MCF 10A (cell line): ENCODE measurements at regions of chr17 and their contacts with region 1.

Region 1: DNA sequence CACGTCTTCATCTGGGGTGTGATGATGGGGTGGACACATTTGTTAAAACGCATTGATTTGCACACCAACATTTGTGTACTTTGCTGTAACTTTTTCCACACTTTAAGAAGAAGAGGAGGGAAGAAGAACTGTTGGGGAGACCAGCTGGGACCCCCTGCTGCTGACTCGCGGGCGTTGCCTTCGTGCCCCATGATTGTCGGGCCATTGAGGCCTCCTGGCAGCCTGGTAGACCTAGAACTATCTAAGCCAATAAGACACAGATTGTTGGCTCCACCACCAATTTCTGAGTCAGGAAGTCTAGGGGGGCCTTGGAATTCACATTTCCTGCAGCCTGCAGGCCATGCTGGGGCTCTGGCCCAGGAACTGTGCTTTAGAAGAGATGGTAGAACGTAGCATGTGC is 105.5 kb downstream of the TNFRSF13B start:
- DNase-seq: no peak
- H3K4me3 Mint-ChIP-seq: no peak overlapping the region
- H3K27ac Mint-ChIP-seq: no peak overlapping the region
- H3K4me1 Mint-ChIP-seq: peaks cover 8% of the 10 kb centered on the region
- H3K27me3 Mint-ChIP-seq: no peaks in the 10 kb centered on the region
- CTCF ChIP-seq: no peak

Region 2: DNA sequence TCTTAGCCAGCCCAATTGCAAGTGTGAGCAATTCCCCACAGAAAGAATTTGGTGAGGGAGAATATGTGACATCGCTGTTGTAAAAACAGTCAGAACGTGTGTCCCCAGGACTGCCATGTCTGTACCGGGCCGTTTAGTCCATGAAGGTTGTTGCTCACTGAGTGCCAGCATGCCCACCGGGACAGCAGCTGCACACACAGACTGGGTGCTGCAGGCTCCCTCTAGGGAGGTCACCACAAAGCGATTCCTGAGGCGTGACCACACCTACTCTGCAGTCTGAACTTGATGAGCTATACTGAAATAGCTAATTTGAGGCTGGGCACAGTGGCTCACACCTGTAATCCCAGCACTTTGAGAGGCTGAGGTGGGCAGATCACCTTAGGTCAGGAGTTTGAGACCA is 965.6 kb before region 1 on chr17:
- CTCF ChIA-PET with region 1: no interaction called
- POLR2A ChIA-PET with region 1: no interaction called
- intact Hi-C with region 1: no loop called
- DNase-seq: no peak
- H3K4me3 Mint-ChIP-seq: no peak overlapping the region
- H3K27ac Mint-ChIP-seq: no peak overlapping the region
- H3K4me1 Mint-ChIP-seq: no peaks in the 10 kb centered on the region
- H3K27me3 Mint-ChIP-seq: no peaks in the 10 kb centered on the region
- CTCF ChIP-seq: no peak

Region 3: DNA sequence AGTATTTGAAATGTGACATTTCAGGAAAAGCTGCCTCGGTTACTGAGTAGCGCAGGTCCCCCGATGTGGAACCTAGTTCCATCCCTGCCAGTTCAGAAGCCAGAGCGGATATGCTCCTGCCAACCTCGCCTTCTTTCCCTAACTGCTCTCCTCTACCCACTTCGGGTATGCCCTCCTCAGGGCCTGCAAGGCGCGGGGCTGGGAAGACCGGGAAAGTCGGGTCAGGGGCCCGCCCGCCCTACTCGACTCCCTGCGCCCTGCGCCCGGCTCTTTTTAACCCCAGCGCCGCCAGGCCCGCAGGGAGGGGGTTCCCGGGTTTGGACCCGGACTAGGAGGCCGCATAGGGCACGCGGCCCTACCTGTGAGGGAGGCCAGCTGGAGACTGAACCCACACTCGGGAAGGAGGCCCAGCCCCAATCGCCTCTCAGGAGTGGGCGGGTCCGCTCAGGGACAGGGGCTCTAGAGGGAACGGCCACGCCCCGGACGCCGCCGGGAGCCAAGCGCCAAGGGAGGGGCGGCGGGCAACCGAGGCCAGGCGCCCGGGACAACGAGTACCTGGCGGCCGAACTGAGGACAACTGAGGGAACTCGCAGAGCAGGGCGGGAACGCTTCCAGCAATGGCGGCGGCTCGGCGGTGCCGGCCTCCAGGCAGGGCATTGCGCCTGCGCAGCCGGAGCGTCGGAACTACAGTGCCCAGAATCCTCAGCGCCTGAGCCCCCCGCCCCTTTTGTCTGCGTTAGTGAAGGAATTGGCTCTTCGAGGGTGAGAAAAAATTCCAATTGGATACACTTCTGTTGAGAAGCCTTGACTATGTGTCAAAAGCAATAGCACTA is 213.0 kb before region 1 on chr17 and contains the start of gene ZNF624:
- CTCF ChIA-PET with region 1: no interaction called
- POLR2A ChIA-PET with region 1: no interaction called
- intact Hi-C with region 1: loop called (anchors 5 kb)
- DNase-seq: peak; percentile 93
- H3K4me3 Mint-ChIP-seq: peak within 1 kb of the TSS; percentile 89
- H3K27ac Mint-ChIP-seq: peak within 1 kb of the TSS; percentile 91
- H3K4me1 Mint-ChIP-seq: peaks cover 6% of the 10 kb centered on the region
- H3K27me3 Mint-ChIP-seq: no peaks in the 10 kb centered on the region
- CTCF ChIP-seq: no peak
- total RNA-seq, gene ZNF624: 3.8 and 4.9 TPM in 2 replicates

Region 4: DNA sequence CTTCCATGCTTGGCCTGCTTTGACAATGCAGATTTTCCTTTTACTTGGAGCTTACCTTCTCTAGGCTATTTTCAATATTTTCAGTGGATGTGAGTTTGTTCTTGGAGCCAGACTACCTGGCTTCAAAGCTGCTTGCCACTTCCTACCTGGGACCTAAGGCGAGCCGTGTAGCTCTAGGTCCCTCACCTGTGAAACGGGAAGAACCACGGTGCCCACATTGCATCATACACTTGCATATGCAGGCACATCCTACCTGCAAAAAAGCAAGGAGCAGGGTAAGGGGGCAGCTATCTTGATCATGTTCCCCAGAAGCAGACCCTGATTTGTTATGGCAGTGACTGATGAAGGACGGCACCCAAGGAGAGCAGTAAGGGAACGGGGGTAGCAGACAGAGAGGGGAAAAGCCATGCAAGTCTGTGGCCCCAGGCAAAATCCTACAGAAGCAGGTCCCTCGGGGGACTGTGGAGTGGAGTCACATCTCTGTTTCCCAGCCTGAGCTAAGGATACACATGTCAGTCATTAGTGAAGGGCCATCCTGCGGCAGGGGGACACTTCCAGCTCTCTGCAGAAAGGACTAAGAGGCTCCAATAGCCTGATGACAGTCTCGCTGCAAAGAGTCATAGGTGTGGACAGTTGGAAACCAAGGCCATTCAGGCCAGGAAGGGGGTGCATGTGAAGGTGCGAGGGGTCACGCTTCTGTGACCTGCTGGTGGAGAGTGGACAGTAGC is 148.9 kb after region 1 on chr17:
- CTCF ChIA-PET with region 1: no interaction called
- POLR2A ChIA-PET with region 1: no interaction called
- intact Hi-C with region 1: no loop called
- DNase-seq: no peak
- H3K4me3 Mint-ChIP-seq: no peak overlapping the region
- H3K27ac Mint-ChIP-seq: peak overlapping the region; percentile 46
- H3K4me1 Mint-ChIP-seq: peaks cover 24% of the 10 kb centered on the region
- H3K27me3 Mint-ChIP-seq: no peaks in the 10 kb centered on the region
- CTCF ChIP-seq: no peak